AG04449 (cell line): ENCODE measurements at regions of chr13 and their contacts with region 1.

Region 1: DNA sequence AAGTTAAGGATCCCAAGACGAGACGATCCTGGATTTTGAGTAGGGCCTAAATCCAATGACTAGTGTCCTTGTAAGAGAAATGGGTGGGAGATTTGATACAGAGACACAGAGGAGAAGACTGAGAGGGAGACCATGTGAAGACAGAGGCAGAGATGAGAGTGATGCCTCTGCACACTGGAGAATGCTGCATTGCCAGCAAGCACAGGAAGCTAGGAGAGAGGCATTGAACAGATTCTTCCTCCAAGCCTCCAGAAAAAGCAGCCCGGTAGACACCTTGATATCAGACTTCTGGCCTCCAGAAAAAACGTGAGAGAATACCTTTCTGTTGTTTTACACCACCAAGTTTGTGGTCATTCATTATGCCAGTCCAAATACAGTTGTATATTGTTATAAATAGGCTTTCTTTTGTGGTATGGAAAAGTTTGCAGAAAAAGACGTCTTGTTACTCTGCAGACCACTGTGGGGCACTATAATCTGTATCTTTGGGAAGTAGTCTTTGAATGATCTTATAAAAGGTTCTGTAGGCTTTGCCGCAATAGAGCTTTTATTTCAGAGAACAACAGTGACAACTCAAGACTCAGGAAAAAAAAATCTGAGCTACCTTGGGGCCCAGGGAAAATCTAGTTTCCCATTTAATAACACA is 17.9 kb upstream of the RFC3 start:
- DNase-seq: peak; percentile 10
- H3K4me3 ChIP-seq: no peak overlapping the region
- CTCF ChIP-seq: peak; percentile 32

Region 2: DNA sequence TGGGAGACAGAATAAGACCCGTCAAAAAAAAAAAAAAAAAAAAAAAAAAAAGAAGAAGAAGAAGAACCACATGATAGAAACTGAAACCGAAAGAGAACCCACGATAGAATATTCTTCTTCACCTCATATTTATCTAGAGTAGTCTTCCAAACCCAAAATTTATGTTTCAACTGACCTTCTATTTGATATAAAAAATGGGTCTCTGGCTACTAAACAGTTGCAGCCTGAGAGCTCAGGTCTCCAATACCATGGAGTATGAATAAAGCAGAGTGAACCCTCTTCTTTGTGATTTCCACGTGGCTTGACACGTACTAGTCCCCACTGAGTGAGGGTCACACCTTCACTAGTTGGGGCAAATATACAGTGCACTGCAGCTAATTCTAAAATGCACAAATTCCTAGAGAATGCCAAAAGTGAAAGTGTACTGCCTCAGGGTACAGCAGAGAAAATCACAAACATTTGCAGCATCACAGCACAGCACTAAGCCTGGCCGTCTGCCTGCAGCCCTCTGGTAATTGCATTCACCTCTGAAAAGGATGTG is 12.9 kb before region 1 on chr13:
- CTCF ChIA-PET with region 1: interaction called, 20 read pairs
- POLR2A ChIA-PET with region 1: no interaction called
- DNase-seq: no peak
- H3K4me3 ChIP-seq: no peak overlapping the region; the same call in 1 of the 2 replicates
- CTCF ChIP-seq: no peak

Region 3: DNA sequence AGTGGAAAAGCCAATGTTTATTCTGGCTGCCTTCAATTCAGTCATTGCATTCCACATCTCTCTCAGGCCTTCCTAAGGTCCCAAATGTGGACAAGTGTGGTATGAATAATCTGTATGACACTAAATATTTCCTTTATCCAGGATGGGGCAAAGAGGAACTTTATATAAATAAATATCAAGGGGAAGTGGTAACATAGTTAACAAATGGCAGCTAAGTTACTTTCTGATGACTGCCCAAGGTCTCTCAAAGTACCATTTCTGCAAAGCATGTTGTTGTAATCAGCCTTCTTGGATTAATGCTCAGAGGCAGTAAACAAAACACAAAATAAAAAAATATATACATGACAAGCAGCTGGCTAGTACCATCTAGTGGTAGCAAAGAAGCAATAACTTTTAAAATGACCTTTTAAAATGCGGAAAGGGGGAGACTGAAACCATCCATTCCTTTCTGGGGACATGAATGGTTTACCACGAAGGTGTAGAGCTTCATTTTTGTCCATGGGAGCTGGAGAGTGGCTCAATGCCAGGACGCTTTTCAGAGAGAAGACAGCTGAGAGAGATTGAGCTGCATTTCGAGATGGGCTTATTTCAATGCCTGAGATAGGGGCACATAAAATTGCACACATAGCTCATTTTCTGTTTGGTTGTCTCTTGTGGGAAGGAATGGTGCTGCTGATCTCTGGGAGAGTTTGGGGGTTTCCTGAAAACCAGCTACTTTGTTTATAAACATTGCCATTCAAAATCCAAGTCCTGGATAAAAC is 277.1 kb after region 1 on chr13:
- CTCF ChIA-PET with region 1: interaction called, 13 read pairs
- POLR2A ChIA-PET with region 1: no interaction called
- DNase-seq: peak; percentile 12
- H3K4me3 ChIP-seq: no peak overlapping the region
- CTCF ChIP-seq: no peak

Region 4: GRCh38 chr13:35164324-35164932 is 1364.4 kb after region 1 on chr13:
- CTCF ChIA-PET with region 1: interaction called, 10 read pairs
- POLR2A ChIA-PET with region 1: no interaction called
- DNase-seq: no peak
- H3K4me3 ChIP-seq: no peak overlapping the region
- CTCF ChIP-seq: peak; percentile 49